Naive thymus-derived CD4-positive, alpha-beta T cell (primary cell): ENCODE measurements at regions of chrX and their contacts with region 1.

Region 1: GRCh38 chrX:151396825-151397740 is at the start of gene VMA21:
- DNase-seq: peak; percentile 70 to 83 (median 80)
- ATAC-seq: peak; percentile 88
- H3K4me3 ChIP-seq: peak within 1 kb of the TSS; percentile 82
- H3K4me3 Mint-ChIP-seq: peak within 1 kb of the TSS; percentile 77 to 91 (median 88)
- H3K27ac ChIP-seq: peak within 1 kb of the TSS; percentile 92
- H3K27ac Mint-ChIP-seq: peak within 1 kb of the TSS; percentile 95 to 99 (median 96)
- H3K4me1 ChIP-seq: peaks cover 17 to 21% of the 10 kb centered on the region in 2 donors
- H3K4me1 Mint-ChIP-seq: peaks cover 25 to 75% (median 71%) of the 10 kb centered on the region in 7 donors
- H3K27me3 ChIP-seq: no peaks in the 10 kb centered on the region
- H3K27me3 Mint-ChIP-seq: no peaks in the 10 kb centered on the region
- total RNA-seq, gene VMA21: 19.3 to 41.0 (median 29.3) TPM

Region 2: GRCh38 chrX:150693775-150694574 is 703.1 kb before region 1 on chrX:
- CTCF ChIA-PET with region 1: no interaction called
- POLR2A ChIA-PET with region 1: interaction called, 3 read pairs
- intact Hi-C with region 1: loop called in 1 of 2 experiments (anchors 10 kb)
- DNase-seq: peak; percentile 12 to 65 (median 51)
- ATAC-seq: peak; percentile 62
- H3K4me3 ChIP-seq: peak overlapping the region; percentile 61
- H3K4me3 Mint-ChIP-seq: peak overlapping the region; percentile 85 to 98 (median 94)
- H3K27ac ChIP-seq: peak overlapping the region; percentile 80
- H3K27ac Mint-ChIP-seq: peak overlapping the region; percentile 95 to 99 (median 97)
- H3K4me1 ChIP-seq: peaks cover 37 to 42% of the 10 kb centered on the region in 2 donors
- H3K4me1 Mint-ChIP-seq: peaks cover 25 to 68% (median 61%) of the 10 kb centered on the region in 7 donors
- H3K27me3 ChIP-seq: no peaks in the 10 kb centered on the region
- H3K27me3 Mint-ChIP-seq: no peaks in the 10 kb centered on the region

Region 3: GRCh38 chrX:150879855-150880808 is 517.0 kb before region 1 on chrX:
- CTCF ChIA-PET with region 1: no interaction called
- POLR2A ChIA-PET with region 1: no interaction called
- intact Hi-C with region 1: loop called in 1 of 2 experiments (anchors 5 kb)
- DNase-seq: no peak
- ATAC-seq: peak; percentile 32
- H3K4me3 ChIP-seq: no peak overlapping the region
- H3K4me3 Mint-ChIP-seq: peak overlapping the region in 4 of 10 donors; percentile 26 to 47 (median 32)
- H3K27ac ChIP-seq: no peak overlapping the region
- H3K27ac Mint-ChIP-seq: peak overlapping the region in 7 of 9 donors; percentile 4 to 87 (median 53)
- H3K4me1 ChIP-seq: peaks cover 0 to 5% of the 10 kb centered on the region in 2 donors
- H3K4me1 Mint-ChIP-seq: peaks cover 11 to 45% (median 27%) of the 10 kb centered on the region in 7 donors
- H3K27me3 ChIP-seq: no peaks in the 10 kb centered on the region
- H3K27me3 Mint-ChIP-seq: no peaks in the 10 kb centered on the region

Region 4: GRCh38 chrX:151359931-151360871 is 36.9 kb before region 1 on chrX:
- CTCF ChIA-PET with region 1: interaction called, 3 read pairs
- POLR2A ChIA-PET with region 1: no interaction called
- intact Hi-C with region 1: loop called (anchors 2 to 5 kb)
- DNase-seq: peak in 8 of 9 donors; percentile 7 to 36 (median 16)
- ATAC-seq: peak; percentile 67
- H3K4me3 ChIP-seq: peak overlapping the region; percentile 26
- H3K4me3 Mint-ChIP-seq: peak overlapping the region in 9 of 10 donors; percentile 21 to 76 (median 62)
- H3K27ac ChIP-seq: no peak overlapping the region
- H3K27ac Mint-ChIP-seq: no peak overlapping the region
- H3K4me1 ChIP-seq: peaks cover 0 to 2% of the 10 kb centered on the region in 2 donors
- H3K4me1 Mint-ChIP-seq: no peaks in the 10 kb centered on the region
- H3K27me3 ChIP-seq: peaks cover 0 to 5% of the 10 kb centered on the region in 2 donors
- H3K27me3 Mint-ChIP-seq: peaks cover 12 to 27% (median 14%) of the 10 kb centered on the region in 5 donors

Region 5: DNA sequence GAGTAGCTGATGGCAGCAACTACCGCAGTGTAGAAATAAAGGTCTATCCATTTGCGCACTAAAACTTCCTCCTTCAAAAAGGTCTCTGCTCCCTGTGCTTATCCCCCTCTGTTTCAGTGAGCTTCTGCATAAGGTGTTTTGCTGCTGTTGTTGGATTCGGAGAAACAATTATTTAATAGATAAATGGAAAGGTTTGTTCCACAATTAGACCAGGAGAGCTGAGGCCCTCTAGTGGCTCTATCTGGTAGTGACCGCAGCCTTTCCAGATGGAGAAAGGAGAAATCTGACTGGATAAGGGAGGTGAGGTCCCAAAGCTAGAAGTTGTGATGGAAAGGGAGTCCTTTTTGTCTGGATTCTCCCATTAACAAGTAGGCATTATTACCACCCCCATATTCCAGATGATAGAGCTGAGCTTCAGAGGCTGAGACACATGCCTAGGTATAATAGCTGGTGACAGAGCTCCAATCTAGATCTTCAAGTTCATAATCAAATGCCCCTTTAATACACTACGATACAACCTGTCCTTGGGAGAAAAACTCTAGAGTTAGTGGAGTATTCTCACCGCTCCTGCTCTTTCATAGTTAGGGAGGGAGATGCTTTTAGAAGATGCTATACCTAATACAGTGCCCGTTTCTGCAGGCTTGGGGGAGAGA is 1235.5 kb after region 1 on chrX:
- CTCF ChIA-PET with region 1: no interaction called
- POLR2A ChIA-PET with region 1: no interaction called
- intact Hi-C with region 1: loop called in 1 of 2 experiments (anchors 5 kb)
- DNase-seq: peak in 5 of 9 donors; percentile 1 to 37 (median 16)
- ATAC-seq: no peak
- H3K4me3 ChIP-seq: no peak overlapping the region
- H3K4me3 Mint-ChIP-seq: no peak overlapping the region
- H3K27ac ChIP-seq: no peak overlapping the region
- H3K27ac Mint-ChIP-seq: no peak overlapping the region
- H3K4me1 ChIP-seq: no peaks in the 10 kb centered on the region
- H3K4me1 Mint-ChIP-seq: no peaks in the 10 kb centered on the region
- H3K27me3 ChIP-seq: no peaks in the 10 kb centered on the region
- H3K27me3 Mint-ChIP-seq: peaks cover 13 to 24% (median 17%) of the 10 kb centered on the region in 5 donors

Region 6: DNA sequence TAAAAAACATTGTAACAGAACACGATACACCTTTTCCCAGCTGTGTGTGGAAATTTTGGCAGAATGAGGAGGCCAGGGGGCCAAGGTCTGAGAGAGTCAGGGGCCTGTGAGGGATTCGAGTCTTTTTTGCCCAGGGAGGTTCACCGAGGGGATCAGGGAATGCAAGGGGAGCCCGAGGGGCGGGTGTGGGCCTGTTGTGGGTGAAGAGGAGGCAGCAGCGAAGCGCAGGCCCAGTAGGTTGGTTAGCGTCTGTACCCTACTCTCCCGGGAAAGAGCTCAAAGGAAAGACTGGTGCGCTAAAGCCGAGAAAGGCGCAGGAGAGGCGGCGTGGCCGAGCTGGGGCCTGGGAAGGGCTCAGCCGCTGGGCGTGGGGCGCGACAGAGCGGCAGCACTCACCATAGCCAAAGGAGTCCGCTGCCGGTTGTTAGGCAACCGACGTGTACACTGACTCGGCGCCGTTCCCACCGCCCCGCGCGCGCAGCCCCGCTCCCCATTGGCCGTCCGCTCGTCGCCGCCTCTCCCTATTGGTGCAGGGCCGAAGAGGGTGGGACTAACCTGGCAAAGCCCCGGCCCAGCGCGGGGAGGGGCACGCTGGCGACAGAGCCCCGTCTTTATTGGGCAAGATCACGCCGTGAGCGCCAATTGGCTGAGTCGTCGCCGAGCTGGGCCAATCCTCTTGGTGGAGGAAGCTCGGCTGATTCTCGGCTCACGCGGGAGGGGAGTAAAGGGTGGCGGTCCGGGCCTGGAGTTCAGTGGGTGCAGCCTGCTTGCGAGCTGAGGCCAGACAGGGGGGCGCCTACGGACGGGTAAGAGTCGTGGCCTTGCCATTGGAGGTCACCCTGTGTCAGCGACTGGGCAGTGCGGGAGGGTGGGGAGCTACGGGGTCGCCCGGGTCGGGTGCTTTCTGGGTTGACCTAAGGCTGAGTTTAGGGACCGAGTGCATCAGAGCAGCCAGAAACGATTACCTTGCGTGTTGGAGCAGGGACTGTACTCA is 1433.5 kb after region 1 on chrX and contains the starts of genes CETN2 and NSDHL:
- CTCF ChIA-PET with region 1: no interaction called
- POLR2A ChIA-PET with region 1: no interaction called
- intact Hi-C with region 1: loop called in 1 of 2 experiments (anchors 2 kb)
- DNase-seq: peak; percentile 83 to 95 (median 92)
- ATAC-seq: peak; percentile 98
- H3K4me3 ChIP-seq: peak within 1 kb of the TSS; percentile 67
- H3K4me3 Mint-ChIP-seq: peak within 1 kb of the TSS; percentile 87 to 98 (median 92)
- H3K27ac ChIP-seq: peak within 1 kb of the TSS; percentile 82
- H3K27ac Mint-ChIP-seq: peak within 1 kb of the TSS; percentile 52 to 98 (median 94)
- H3K4me1 ChIP-seq: peaks cover 6 to 9% of the 10 kb centered on the region in 2 donors
- H3K4me1 Mint-ChIP-seq: peaks cover 11 to 28% (median 26%) of the 10 kb centered on the region in 7 donors
- H3K27me3 ChIP-seq: no peaks in the 10 kb centered on the region
- H3K27me3 Mint-ChIP-seq: no peaks in the 10 kb centered on the region
- total RNA-seq, gene CETN2: 7.0 to 10.9 (median 7.6) TPM
- total RNA-seq, gene NSDHL: 3.3 to 13.9 (median 7.2) TPM